Activated CD4-positive, alpha-beta T cell treated with anti-CD3 and anti-CD28 coated beads for 36 hours (primary cell): ENCODE measurements at regions of chr11 and their contacts with region 1.

Region 1: GRCh38 chr11:64304316-64305072 is 830 bp upstream of the ESRRA start:
- DNase-seq: peak; percentile 99
- ATAC-seq: peak; percentile 49
- H3K4me3 Mint-ChIP-seq: peak overlapping the region; percentile 100
- H3K27ac Mint-ChIP-seq: peak overlapping the region; percentile 95
- H3K4me1 Mint-ChIP-seq: peaks cover 34% of the 10 kb centered on the region
- H3K27me3 Mint-ChIP-seq: peaks cover 14% of the 10 kb centered on the region

Region 2: DNA sequence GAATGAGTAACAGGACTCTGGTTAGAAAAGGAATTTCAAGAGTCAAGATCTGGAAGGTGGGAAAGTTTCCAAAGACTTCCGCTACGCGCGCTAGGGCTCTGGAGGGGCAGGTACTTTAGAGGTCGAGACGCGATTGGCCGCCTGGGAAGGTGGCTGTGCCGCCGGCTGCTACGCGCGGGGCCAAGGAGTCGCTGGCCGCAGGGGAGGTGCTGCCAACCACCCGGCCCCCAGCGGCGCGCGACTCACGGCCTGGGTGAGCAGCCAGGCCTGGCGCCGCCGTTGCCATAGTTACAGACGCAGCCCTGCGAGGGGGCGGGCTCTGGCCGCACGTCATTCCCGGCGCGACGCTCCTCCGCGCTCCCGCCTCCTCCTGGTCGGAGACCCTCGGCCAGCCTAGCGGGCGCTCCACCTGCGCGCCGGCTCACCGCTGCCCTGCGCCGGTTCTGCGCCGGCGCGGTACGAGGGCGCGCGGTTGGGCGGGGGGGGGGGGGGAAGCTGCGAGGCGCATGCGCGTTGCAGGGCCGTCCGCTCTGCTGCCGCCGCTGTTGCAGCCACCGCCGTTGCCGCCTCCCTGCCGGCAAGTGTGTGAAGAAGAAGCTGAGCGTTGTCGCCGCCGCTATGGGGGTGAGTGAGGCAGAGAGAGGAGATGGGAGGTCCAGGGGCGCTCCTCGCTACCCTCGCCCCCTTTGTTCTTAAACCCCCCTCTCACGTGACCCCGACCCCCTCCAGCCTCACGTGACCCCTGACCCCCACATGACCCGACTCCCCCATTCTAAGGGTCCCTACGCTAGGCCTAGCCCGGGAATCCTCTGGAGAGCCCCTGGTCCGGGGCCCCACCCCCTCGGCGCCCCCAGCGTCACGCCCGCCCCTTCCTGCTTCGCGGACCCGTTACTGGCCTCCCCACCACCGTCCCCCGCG is 365.8 kb before region 1 on chr11 and contains the start of gene NAA40:
- CTCF ChIA-PET with region 1: no interaction called
- POLR2A ChIA-PET with region 1: no interaction called
- intact Hi-C with region 1: loop called in 1 of 2 experiments (anchors 1 kb)
- DNase-seq: peak; percentile 97
- ATAC-seq: peak; percentile 93
- H3K4me3 Mint-ChIP-seq: peak within 1 kb of the TSS; percentile 83
- H3K27ac Mint-ChIP-seq: peak within 1 kb of the TSS; percentile 87
- H3K4me1 Mint-ChIP-seq: peaks cover 16% of the 10 kb centered on the region
- H3K27me3 Mint-ChIP-seq: no peaks in the 10 kb centered on the region
- total RNA-seq, gene NAA40: 13.7 to 15.9 TPM

Region 3: GRCh38 chr11:64185816-64186498 is 118.5 kb before region 1 on chr11 and contains the start of gene STIP1:
- CTCF ChIA-PET with region 1: interaction called, 6 read pairs
- POLR2A ChIA-PET with region 1: no interaction called
- intact Hi-C with region 1: loop called (anchors 1 kb)
- DNase-seq: peak; percentile 99
- ATAC-seq: peak; percentile 92
- H3K4me3 Mint-ChIP-seq: no peak within 1 kb of the TSS
- H3K27ac Mint-ChIP-seq: peak within 1 kb of the TSS; percentile 92
- H3K4me1 Mint-ChIP-seq: peaks cover 42% of the 10 kb centered on the region
- H3K27me3 Mint-ChIP-seq: no peaks in the 10 kb centered on the region
- total RNA-seq, gene STIP1: 398 to 403 TPM

Region 4: GRCh38 chr11:64240394-64241174 is 63.9 kb before region 1 on chr11 and contains the start of gene FKBP2:
- CTCF ChIA-PET with region 1: interaction called, 6 read pairs
- POLR2A ChIA-PET with region 1: interaction called, 5 read pairs
- intact Hi-C with region 1: loop called (anchors 1 kb)
- DNase-seq: peak; percentile 99
- ATAC-seq: peak; percentile 68
- H3K4me3 Mint-ChIP-seq: peak within 1 kb of the TSS; percentile 86
- H3K27ac Mint-ChIP-seq: peak within 1 kb of the TSS; percentile 99
- H3K4me1 Mint-ChIP-seq: peaks cover 31% of the 10 kb centered on the region
- H3K27me3 Mint-ChIP-seq: no peaks in the 10 kb centered on the region
- total RNA-seq, gene FKBP2: 19.9 to 21.3 TPM

Region 5: GRCh38 chr11:64284048-64284961 is 20.2 kb before region 1 on chr11 and contains the start of gene BAD:
- CTCF ChIA-PET with region 1: interaction called, 27 read pairs
- POLR2A ChIA-PET with region 1: no interaction called
- intact Hi-C with region 1: loop called (anchors 1 kb)
- DNase-seq: peak; percentile 97
- ATAC-seq: peak; percentile 88
- H3K4me3 Mint-ChIP-seq: peak within 1 kb of the TSS; percentile 77
- H3K27ac Mint-ChIP-seq: peak within 1 kb of the TSS; percentile 85
- H3K4me1 Mint-ChIP-seq: peaks cover 18% of the 10 kb centered on the region
- H3K27me3 Mint-ChIP-seq: no peaks in the 10 kb centered on the region
- total RNA-seq, gene BAD: 21.3 to 22.9 TPM

Region 6: DNA sequence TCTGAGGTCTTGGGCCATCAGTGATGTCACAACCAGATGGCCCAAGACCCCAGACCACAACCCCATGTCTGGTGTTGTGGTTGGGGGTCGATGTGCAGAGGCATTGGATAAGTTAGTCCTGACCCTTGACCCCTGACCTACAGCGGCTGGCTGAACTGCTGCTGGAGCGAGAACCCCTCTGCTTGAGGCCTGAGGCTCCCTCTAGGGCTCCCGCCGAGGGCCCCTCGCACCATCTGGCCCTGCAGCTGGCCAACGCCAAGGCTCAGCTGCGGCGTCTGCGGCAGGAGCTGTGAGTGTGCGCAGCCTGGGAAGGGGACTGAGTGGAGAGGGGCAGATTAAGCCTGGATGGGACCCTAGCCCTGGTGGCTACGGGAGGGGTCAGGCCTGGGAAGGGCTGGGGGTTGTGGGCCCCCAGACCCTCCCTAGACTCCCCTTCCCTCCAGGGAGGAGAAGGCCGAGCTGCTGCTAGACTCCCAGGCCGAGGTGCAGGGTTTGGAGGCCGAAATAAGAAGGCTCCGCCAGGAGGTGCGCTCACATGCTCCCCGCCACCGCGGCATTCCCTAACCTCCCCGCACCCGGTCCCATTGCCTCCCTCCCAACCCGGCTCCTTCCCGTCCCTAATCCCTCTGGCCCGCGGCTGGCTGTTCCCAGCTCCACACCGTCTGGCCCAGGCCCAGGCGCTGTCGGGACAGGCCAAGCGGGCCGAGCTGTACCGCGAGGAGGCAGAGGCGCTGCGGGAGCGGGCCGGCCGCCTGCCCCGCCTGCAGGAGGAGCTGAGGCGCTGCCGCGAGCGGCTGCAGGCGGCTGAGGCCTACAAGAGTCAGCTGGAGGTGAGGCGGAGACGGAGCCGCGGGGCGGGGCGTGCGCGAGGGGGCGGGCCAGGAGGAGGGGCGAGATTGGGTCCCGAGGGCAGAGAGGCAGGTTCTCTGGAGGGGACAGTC is 37.6 kb after region 1 on chr11:
- CTCF ChIA-PET with region 1: interaction called, 3 read pairs
- POLR2A ChIA-PET with region 1: no interaction called
- intact Hi-C with region 1: loop called (anchors 1 to 5 kb)
- DNase-seq: peak; percentile 96
- ATAC-seq: peak; percentile 77
- H3K4me3 Mint-ChIP-seq: no peak overlapping the region
- H3K27ac Mint-ChIP-seq: no peak overlapping the region
- H3K4me1 Mint-ChIP-seq: peaks cover 28% of the 10 kb centered on the region
- H3K27me3 Mint-ChIP-seq: no peaks in the 10 kb centered on the region

Region 7: GRCh38 chr11:65236194-65237059 is 931.9 kb after region 1 on chr11:
- CTCF ChIA-PET with region 1: no interaction called
- POLR2A ChIA-PET with region 1: no interaction called
- intact Hi-C with region 1: no loop called
- DNase-seq: no peak
- ATAC-seq: no peak
- H3K4me3 Mint-ChIP-seq: no peak overlapping the region
- H3K27ac Mint-ChIP-seq: no peak overlapping the region
- H3K4me1 Mint-ChIP-seq: no peaks in the 10 kb centered on the region
- H3K27me3 Mint-ChIP-seq: peaks cover 4% of the 10 kb centered on the region